OCI-LY7 (cell line): ENCODE measurements at regions of chr2 and their contacts with region 1.

Region 1: DNA sequence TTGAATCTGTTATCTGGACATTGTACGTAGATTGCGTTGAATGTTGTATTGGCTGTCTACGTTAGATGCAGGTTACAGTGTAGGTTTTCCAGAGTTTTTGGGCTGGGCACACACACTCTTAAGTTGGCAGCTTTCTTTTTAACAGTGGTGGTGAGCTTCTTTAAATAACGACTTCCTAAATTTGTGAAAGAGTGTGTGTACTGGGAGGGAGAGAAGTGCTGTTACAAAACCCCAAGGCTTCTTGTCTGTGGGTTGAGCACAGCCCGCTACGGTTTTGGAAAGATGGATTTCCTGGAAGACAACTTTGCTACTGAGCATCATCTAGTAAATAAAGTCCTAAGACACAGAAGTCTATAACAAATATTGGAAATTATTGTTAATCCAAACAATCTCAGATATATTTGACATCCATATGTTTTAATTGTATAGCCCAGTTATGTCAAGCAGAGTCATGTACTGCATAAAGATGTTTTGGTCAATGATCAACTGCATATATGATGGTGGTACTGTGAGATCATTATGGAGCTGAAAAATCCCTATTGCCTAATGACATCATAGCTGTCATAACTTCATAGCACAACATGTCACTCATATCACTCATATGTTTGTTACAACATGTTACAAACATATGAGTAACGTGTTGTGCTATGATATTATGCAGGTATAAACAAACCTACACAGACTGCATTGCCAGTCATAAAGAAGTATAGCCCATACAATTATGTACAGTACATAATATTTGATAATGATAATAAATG is 7.9 kb upstream of the THUMPD2 start:
- DNase-seq: no peak
- H3K4me3 ChIP-seq: no peak overlapping the region
- H3K27ac ChIP-seq: no peak overlapping the region
- H3K4me1 ChIP-seq: no peaks in the 10 kb centered on the region
- CTCF ChIP-seq: no peak

Region 2: DNA sequence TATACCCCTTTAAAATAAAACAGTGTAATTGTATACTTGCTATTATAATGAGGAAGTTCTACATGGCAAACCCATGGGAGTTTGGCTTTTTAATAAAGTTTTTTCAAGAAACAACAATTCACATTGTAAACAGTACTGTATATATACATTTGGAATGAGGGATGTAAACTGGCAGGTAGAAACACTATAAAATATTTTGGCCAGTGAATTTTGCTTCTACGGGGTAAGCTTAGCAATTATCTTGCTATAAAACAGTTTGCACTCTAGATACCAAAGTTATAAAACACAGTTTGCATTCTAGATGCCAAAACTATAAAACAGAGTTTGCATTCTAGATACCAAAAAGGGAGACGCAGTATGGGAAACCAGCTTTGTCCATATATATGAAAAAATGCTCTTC is 24.5 kb before region 1 on chr2:
- CTCF ChIA-PET with region 1: no interaction called
- POLR2A ChIA-PET with region 1: no interaction called
- intact Hi-C with region 1: loop called (anchors 1 kb)
- DNase-seq: no peak
- H3K4me3 ChIP-seq: no peak overlapping the region
- H3K27ac ChIP-seq: no peak overlapping the region
- H3K4me1 ChIP-seq: no peaks in the 10 kb centered on the region
- CTCF ChIP-seq: no peak

Region 3: DNA sequence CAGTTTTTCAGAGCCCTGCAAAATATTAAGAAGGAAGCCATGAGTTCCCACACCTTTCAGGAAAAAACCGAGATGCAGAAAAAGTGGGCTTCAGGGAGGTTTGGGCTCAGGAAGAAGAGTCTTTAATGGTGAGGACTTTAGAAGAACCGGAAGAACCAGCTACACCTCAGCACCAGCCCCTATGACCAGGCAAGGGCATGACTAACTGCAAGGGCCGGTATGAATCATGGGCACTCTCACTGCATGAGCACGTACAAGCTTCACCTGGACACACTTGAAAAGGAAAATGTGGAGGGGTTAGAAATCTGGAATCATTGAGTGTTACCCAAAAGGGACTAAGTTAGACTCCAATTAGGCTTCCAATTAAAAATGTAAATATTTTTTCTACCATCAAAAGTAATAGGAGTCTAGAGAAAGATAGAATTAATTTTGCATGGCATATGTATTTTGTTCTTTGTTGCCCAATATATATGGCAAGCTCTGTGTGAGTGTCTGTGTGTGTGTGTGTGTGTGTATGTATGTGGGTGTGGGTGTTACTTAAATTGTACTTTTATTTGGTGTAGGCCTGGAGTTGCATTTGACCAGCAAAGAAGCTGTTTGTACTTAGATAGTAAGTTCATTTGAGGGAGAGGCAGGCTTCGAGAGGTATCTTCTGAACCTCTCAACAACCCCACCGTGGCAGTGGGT is 58.7 kb after region 1 on chr2:
- CTCF ChIA-PET with region 1: no interaction called
- POLR2A ChIA-PET with region 1: no interaction called
- intact Hi-C with region 1: no loop called
- DNase-seq: no peak
- H3K4me3 ChIP-seq: no peak overlapping the region
- H3K27ac ChIP-seq: no peak overlapping the region
- H3K4me1 ChIP-seq: peaks cover 9% of the 10 kb centered on the region
- CTCF ChIP-seq: no peak